Activated CD8-positive, alpha-beta T cell treated with anti-CD3 and anti-CD28 coated beads, Interleukin-2, amount 10 ng/mL, durations not matched to agents 7 days and 5 days (primary cell): ENCODE measurements at regions of chr4 and their contacts with region 1.

Region 1: DNA sequence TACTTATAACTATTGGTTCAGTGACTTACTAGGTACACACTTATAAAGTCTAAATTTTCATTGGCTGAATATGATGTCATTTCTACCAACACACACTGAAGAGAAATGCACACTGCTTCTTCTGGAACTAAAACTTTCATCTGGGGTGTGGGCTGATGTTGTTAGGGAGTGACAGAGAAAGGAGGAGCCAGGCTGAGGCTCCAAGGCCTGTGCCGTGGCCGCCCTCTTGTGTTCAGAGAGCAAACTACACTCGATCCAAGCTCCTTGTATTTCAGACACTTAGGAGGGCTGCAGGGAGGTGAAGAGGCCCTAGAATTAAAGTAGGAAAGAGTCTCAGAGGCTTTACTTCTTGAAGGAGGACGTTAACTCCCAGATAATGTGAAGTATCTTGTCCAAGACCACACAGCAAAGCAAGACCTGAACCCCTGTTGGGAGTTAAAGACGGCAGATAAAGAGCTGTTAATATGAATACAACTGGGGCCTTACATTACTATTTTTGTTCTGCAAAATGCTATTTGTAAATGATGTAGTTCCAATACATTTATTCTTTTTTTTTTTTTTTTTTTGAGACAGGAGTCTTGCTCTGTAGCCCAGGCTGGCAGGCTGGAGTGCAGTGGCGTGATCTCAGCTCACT is 137.5 kb downstream of the AFAP1 start:
- DNase-seq: peak; percentile 87
- ATAC-seq: peak; percentile 88
- H3K4me3 Mint-ChIP-seq: no peak overlapping the region
- H3K27ac Mint-ChIP-seq: no peak overlapping the region
- H3K4me1 Mint-ChIP-seq: peaks cover 8% of the 10 kb centered on the region
- H3K27me3 Mint-ChIP-seq: no peaks in the 10 kb centered on the region

Region 2: GRCh38 chr4:7761720-7762119 is 40.5 kb before region 1 on chr4:
- CTCF ChIA-PET with region 1: interaction called, 70 read pairs
- POLR2A ChIA-PET with region 1: no interaction called
- DNase-seq: peak; percentile 66
- ATAC-seq: peak; percentile 38
- H3K4me3 Mint-ChIP-seq: no peak overlapping the region
- H3K27ac Mint-ChIP-seq: peak overlapping the region; percentile 43
- H3K4me1 Mint-ChIP-seq: peaks cover 42% of the 10 kb centered on the region
- H3K27me3 Mint-ChIP-seq: no peaks in the 10 kb centered on the region

Region 3: GRCh38 chr4:7821245-7822136 is 19.3 kb after region 1 on chr4:
- CTCF ChIA-PET with region 1: interaction called, 20 read pairs
- POLR2A ChIA-PET with region 1: no interaction called
- DNase-seq: no peak
- ATAC-seq: no peak
- H3K4me3 Mint-ChIP-seq: no peak overlapping the region
- H3K27ac Mint-ChIP-seq: no peak overlapping the region
- H3K4me1 Mint-ChIP-seq: peaks cover 3% of the 10 kb centered on the region
- H3K27me3 Mint-ChIP-seq: no peaks in the 10 kb centered on the region

Region 4: GRCh38 chr4:7843831-7844593 is 41.8 kb after region 1 on chr4:
- CTCF ChIA-PET with region 1: interaction called, 64 read pairs
- POLR2A ChIA-PET with region 1: interaction called, 3 read pairs
- DNase-seq: peak; percentile 79
- ATAC-seq: peak; percentile 95
- H3K4me3 Mint-ChIP-seq: no peak overlapping the region
- H3K27ac Mint-ChIP-seq: no peak overlapping the region
- H3K4me1 Mint-ChIP-seq: peaks cover 17% of the 10 kb centered on the region
- H3K27me3 Mint-ChIP-seq: no peaks in the 10 kb centered on the region

Region 5: DNA sequence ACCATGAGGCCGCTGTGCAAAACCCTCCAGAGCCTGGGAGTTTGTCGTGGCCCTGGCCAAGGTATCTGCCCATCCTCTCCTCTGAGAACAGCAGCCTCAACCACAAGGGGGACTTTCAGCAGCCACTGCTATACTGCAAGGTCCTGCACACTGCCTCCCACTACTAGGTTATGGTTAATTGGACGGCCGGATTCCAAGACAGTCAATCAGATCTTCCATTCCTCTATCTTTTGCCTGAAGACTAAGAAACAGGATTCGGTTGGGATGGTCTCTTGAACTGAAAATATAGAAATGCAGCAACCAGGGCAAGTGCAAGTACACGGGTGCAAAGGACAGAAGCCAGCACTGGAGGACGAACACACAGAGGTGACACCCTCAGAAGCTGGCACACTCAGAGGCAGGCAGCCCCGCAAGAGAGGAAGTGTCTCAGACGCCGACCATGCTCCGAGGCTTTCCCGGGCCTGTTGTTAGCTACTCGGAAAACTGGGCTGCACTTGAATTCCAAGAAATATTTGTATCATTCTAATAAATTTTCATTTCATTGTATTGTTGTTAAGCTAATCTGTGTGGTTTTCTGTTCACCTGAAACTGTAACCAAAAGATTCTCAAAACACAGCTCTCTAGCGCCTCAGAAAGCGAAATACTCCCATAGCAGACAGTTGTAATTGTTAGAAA is 74.1 kb after region 1 on chr4:
- CTCF ChIA-PET with region 1: interaction called, 23 read pairs
- POLR2A ChIA-PET with region 1: no interaction called
- DNase-seq: peak; percentile 45
- ATAC-seq: peak; percentile 85
- H3K4me3 Mint-ChIP-seq: peak overlapping the region; percentile 32
- H3K27ac Mint-ChIP-seq: peak overlapping the region; percentile 63
- H3K4me1 Mint-ChIP-seq: peaks cover 31% of the 10 kb centered on the region
- H3K27me3 Mint-ChIP-seq: no peaks in the 10 kb centered on the region

Region 6: DNA sequence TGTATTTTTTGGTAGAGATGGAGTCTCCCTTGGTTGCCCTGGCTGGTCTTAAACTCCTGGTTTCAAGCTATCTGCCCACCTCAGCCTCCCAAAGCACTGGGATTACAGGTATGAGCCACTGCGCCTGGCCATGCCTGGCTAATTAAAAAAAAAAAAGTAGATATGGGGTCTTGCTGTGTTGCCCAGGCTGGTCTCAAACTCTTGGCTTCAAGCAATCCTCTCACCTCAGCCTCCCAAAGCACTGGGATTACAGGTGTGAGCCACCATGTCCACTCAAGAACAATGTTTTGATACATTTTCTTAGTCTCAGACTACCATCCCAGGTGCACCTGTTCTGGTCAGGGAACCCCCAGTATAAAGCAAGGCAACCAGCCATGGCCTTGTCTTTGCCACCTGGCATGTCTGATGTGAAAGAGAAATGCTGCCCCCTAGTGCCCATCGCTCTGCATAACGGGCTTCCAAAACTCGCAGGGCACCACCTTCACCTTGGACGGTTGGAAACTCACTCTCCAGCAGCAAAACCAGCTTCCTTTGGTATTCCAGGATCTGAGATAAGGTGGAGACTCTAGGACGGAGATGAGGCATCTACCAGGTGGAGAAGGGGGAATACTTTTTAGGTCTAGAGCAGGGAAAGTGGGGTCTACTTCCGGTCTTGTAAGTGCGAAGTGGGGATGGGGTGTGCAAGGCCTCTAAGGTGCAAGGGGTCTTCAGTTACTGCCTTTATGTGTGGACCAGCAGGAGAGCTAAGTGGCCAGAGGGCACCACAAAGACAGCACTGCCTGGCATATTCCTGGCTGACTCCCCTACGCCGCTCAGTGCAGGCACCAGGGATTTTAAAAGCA is 185.2 kb after region 1 on chr4:
- CTCF ChIA-PET with region 1: interaction called, 105 read pairs
- POLR2A ChIA-PET with region 1: interaction called, 3 read pairs
- DNase-seq: peak; percentile 85
- ATAC-seq: peak; percentile 90
- H3K4me3 Mint-ChIP-seq: no peak overlapping the region
- H3K27ac Mint-ChIP-seq: no peak overlapping the region
- H3K4me1 Mint-ChIP-seq: peaks cover 10% of the 10 kb centered on the region
- H3K27me3 Mint-ChIP-seq: peaks cover 2% of the 10 kb centered on the region